Left ventricle myocardium superior (tissue), 1 donor: ENCODE measurements at regions of chr2 and their contacts with region 1.

Region 1: DNA sequence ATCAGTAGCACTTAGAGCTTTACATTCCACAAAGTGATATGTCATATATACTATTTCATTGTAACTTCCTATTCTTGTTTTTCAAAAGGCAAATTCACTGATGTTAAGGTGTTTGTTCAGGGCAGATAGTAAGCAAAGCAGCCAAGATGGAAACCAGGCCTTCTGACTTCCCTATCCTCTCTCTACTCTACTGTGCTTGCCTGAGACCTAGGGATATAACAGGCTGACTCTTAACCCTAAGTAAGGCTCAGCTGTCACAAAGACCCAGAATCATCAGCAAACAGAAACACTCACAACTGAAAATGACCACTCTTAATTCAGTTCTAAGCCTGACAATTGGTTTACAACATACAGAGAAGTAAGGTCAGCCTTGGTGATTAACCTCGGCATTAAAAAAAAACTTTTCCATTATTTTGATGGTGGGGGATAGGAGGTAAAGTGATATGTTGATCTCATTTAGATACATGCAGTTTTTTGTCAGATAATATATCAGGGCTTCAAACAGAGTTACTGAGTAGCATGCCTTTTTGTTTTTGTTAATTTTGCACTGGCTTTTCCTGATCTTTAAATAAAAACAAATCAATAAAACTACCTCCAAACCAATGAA is 95.4 kb upstream of the CHRNA1 start:
- DNase-seq: no peak
- ATAC-seq: no peak

Region 2: DNA sequence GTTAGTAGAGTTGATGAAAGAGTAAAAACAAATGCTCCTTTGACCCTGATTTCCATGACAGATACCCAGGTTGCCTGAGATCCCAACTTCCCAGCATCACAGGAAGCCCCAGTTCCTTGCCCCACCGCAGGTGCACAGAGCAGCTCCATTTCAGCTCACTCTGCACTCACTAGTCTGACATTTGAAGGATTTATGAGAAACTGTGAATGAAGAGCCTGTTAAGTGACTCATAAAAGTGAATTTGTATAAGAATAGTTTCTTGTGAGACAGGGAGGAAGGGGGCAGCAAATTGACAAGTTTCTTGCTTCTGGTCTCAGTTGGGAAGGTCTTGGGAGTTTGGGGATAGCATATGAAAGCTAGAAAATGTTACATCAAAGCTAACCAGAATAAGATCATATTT is 570.6 kb after region 1 on chr2:
- intact Hi-C with region 1: no loop called
- DNase-seq: no peak
- ATAC-seq: no peak

Region 3: GRCh38 chr2:176682278-176682677 is 1822.6 kb after region 1 on chr2:
- intact Hi-C with region 1: loop called (anchors 5 kb)
- DNase-seq: no peak
- ATAC-seq: no peak